Left cardiac atrium (tissue), 4 donors: ENCODE measurements at regions of chr2 and their contacts with region 1.

Region 1: GRCh38 chr2:218849721-218850120 is 9.9 kb upstream of the WNT6 start:
- DNase-seq: no peak
- ATAC-seq: no peak

Region 2: GRCh38 chr2:218710687-218711549 is 138.8 kb before region 1 on chr2 and contains the start of gene TTLL4:
- intact Hi-C with region 1: loop called in 1 of 2 experiments (anchors 5 kb)
- DNase-seq: peak; percentile 99
- ATAC-seq: peak; percentile 98 to 99
- total RNA-seq, gene TTLL4: 8.0 to 12.3 TPM

Region 3: DNA sequence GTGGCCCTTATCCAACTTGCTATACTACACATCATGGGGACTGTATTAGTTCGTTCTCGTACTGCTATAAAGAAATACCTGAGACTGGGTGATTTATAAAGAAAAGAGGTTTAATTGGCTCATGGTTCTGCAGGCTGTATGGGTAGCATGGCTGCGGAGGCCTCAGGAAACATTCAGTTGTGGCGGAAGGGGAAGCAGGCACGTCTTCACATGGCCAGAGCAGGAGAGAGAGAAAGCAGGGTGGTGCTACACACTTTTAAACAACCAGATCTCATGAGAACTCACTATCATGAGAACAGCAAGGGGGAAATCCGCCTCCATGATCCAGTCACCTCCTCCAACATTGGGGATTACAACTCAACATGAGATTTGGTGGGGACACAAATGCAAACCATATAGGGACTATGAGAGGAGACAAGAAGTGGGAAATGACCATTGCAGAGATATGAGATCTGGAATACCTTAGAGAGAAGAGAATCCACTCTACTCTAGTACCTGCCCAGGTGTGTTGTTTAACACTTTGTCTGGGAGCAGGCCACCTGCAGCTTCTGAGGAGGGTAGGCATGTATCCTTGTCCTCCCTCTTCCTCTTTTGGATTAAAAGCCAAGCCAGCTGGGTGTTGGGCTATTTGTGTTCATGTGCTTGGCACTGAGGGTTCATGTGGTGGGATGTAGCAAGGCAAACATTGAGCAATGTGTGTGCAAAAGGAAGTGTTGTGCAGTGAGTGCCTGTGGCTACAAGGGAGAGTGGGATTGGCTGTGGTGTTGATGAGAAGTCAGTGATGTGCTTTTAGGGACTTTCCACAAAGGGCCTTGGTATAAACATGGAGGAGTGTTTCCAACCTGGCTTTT is 116.3 kb before region 1 on chr2:
- intact Hi-C with region 1: loop called in 1 of 2 experiments (anchors 10 kb)
- DNase-seq: peak; percentile 52
- ATAC-seq: peak; percentile 64 to 73